CD4-positive, alpha-beta T cell (primary cell): ENCODE measurements at regions of chr11 and their contacts with region 1.

Region 1: GRCh38 chr11:59822989-59823566 is 12.5 kb upstream of the MRPL16 start:
- DNase-seq: peak in 5 of 14 experiments; percentile 2 to 69 (median 57)
- ATAC-seq: peak; percentile 57
- H3K4me3 ChIP-seq: no peak overlapping the region
- H3K4me3 Mint-ChIP-seq: no peak overlapping the region
- H3K27ac ChIP-seq: no peak overlapping the region
- H3K27ac Mint-ChIP-seq: no peak overlapping the region
- H3K4me1 ChIP-seq: peaks cover 8% of the 10 kb centered on the region
- H3K4me1 Mint-ChIP-seq: peaks cover 10% of the 10 kb centered on the region
- H3K27me3 ChIP-seq: no peaks in the 10 kb centered on the region
- H3K27me3 Mint-ChIP-seq: peaks cover 4% of the 10 kb centered on the region
- CTCF ChIP-seq: peak; percentile 49

Region 2: GRCh38 chr11:60077981-60078380 is 254.9 kb after region 1 on chr11:
- CTCF ChIA-PET with region 1: no interaction called
- POLR2A ChIA-PET with region 1: no interaction called
- intact Hi-C with region 1: no loop called
- DNase-seq: no peak
- ATAC-seq: no peak
- H3K4me3 ChIP-seq: no peak overlapping the region
- H3K4me3 Mint-ChIP-seq: no peak overlapping the region
- H3K27ac ChIP-seq: no peak overlapping the region
- H3K27ac Mint-ChIP-seq: no peak overlapping the region
- H3K4me1 ChIP-seq: no peaks in the 10 kb centered on the region
- H3K4me1 Mint-ChIP-seq: no peaks in the 10 kb centered on the region
- H3K27me3 ChIP-seq: no peaks in the 10 kb centered on the region
- H3K27me3 Mint-ChIP-seq: no peaks in the 10 kb centered on the region
- CTCF ChIP-seq: no peak

Region 3: DNA sequence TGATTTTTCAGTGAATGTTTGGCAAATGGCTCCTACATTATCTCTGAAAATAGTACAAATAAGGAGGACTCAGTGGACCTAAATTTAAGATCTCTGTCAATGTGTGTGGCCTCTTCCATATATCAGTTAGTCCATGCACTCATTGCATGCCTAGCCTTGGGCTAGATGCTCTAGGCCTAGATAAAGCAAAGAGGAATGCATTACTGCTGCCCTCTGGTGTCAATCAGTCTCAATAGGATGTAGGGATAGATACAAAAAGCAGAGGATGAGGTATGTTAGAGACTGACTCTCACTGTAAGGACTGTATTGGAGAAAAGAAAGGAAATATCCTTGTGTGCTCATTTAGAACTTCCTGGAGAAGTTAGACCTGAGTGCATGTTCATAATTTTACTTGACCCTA is 307.4 kb after region 1 on chr11:
- CTCF ChIA-PET with region 1: no interaction called
- POLR2A ChIA-PET with region 1: no interaction called
- intact Hi-C with region 1: loop called in 1 of 2 experiments (anchors 2 kb)
- DNase-seq: peak in 3 of 14 experiments; percentile 12 to 27 (median 23)
- ATAC-seq: no peak
- H3K4me3 ChIP-seq: no peak overlapping the region
- H3K4me3 Mint-ChIP-seq: no peak overlapping the region
- H3K27ac ChIP-seq: no peak overlapping the region
- H3K27ac Mint-ChIP-seq: no peak overlapping the region
- H3K4me1 ChIP-seq: no peaks in the 10 kb centered on the region
- H3K4me1 Mint-ChIP-seq: no peaks in the 10 kb centered on the region
- H3K27me3 ChIP-seq: no peaks in the 10 kb centered on the region
- H3K27me3 Mint-ChIP-seq: no peaks in the 10 kb centered on the region
- CTCF ChIP-seq: peak; percentile 22

Region 4: DNA sequence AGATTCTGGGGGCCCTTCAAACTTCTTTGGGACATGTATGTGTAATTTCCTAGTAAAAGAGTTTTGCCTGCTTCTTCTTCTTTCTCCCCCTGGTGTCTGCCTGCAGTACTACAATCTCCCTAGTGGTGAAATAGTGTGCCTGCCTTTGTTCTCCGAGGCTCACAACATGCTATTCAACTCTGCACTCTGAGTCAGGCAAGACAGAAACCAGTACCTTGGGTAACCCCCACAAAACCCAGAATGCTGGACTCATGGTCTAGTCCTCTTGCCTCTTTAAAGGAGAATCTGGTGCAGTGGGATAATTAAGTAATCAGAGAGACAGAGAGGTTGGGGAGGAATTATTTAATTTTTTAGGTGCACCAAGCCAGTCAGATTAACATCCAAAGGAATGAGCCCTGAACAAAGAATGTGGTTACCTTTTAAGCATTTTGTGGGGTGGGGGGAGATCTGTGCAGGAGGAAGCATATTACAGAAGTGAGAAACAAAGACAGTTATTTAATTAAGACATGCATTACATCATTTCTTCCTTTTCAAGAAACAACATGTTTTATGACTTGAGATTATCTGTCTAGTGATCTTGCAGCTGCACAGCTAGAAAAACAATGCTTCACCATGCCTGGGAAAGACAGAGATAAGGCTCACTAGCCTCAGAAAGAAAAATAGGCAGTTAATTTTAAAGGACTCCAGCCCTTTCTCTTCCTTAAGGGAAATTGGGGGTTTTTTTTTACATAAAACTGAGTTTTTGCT is 370.8 kb after region 1 on chr11:
- CTCF ChIA-PET with region 1: no interaction called
- POLR2A ChIA-PET with region 1: no interaction called
- intact Hi-C with region 1: loop called (anchors 1 to 5 kb)
- DNase-seq: peak; percentile 3 to 70 (median 42)
- ATAC-seq: peak; percentile 93
- H3K4me3 ChIP-seq: no peak overlapping the region
- H3K4me3 Mint-ChIP-seq: peak overlapping the region; percentile 3
- H3K27ac ChIP-seq: no peak overlapping the region
- H3K27ac Mint-ChIP-seq: peak overlapping the region; percentile 80
- H3K4me1 ChIP-seq: no peaks in the 10 kb centered on the region
- H3K4me1 Mint-ChIP-seq: peaks cover 26% of the 10 kb centered on the region
- H3K27me3 ChIP-seq: no peaks in the 10 kb centered on the region
- H3K27me3 Mint-ChIP-seq: peaks cover 10% of the 10 kb centered on the region
- CTCF ChIP-seq: peak; percentile 82

Region 5: GRCh38 chr11:60251485-60252212 is 428.6 kb after region 1 on chr11:
- CTCF ChIA-PET with region 1: no interaction called
- POLR2A ChIA-PET with region 1: no interaction called
- intact Hi-C with region 1: loop called (anchors 2 kb)
- DNase-seq: peak in 3 of 14 experiments; percentile 4 to 49 (median 11)
- ATAC-seq: no peak
- H3K4me3 ChIP-seq: no peak overlapping the region
- H3K4me3 Mint-ChIP-seq: no peak overlapping the region
- H3K27ac ChIP-seq: no peak overlapping the region
- H3K27ac Mint-ChIP-seq: no peak overlapping the region
- H3K4me1 ChIP-seq: no peaks in the 10 kb centered on the region
- H3K4me1 Mint-ChIP-seq: no peaks in the 10 kb centered on the region
- H3K27me3 ChIP-seq: peaks cover 0 to 7% of the 10 kb centered on the region in 2 experiments
- H3K27me3 Mint-ChIP-seq: peaks cover 17% of the 10 kb centered on the region
- CTCF ChIP-seq: peak; percentile 55

Region 6: DNA sequence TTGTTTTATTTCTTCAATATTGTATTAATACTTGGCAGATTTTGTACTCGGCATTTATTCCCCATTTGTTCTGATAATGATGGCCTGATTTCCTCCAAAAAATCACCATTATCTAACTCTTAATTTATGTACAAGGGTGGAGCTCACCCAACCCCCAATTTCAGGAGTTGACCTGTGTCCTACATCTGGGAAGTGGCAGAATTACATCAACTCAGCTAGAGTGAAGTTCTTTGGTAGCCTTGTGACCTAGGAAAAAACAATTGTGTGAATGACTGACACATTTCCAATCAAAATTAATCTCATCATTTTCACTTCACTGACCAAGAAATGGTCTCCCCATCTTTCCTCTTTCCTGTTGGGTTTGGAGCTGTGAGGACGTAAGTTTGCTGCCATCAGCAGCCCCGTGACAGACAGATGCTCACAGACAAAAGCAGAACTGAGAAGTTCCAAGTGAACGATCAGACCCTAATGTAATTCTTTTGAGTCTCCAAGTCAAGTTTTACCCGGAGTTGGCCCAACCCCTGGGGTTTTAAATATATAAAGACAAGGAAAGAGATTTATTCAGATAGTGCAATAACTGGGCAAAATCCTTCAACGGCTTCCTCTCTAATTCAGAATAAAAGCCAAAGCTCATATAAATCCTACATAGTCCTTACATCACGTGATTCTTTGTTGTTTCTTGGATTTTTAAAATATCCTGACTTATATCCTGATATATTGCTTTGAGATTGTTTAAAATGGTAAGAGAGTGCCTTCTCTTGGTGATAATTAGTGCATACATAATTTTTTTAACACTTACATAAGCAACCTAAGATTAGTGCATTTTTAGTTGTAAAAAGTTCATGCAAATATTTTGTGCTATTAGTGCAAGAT is 487.6 kb after region 1 on chr11:
- CTCF ChIA-PET with region 1: no interaction called
- POLR2A ChIA-PET with region 1: no interaction called
- intact Hi-C with region 1: no loop called
- DNase-seq: peak in 3 of 14 experiments; percentile 7 to 40 (median 35)
- ATAC-seq: no peak
- H3K4me3 ChIP-seq: no peak overlapping the region
- H3K4me3 Mint-ChIP-seq: no peak overlapping the region
- H3K27ac ChIP-seq: no peak overlapping the region
- H3K27ac Mint-ChIP-seq: no peak overlapping the region
- H3K4me1 ChIP-seq: no peaks in the 10 kb centered on the region
- H3K4me1 Mint-ChIP-seq: no peaks in the 10 kb centered on the region
- H3K27me3 ChIP-seq: peaks cover 3 to 5% of the 10 kb centered on the region in 2 experiments
- H3K27me3 Mint-ChIP-seq: peaks cover 25% of the 10 kb centered on the region
- CTCF ChIP-seq: no peak